B cell (primary cell): ENCODE measurements at regions of chr14 and their contacts with region 1.

Region 1: GRCh38 chr14:106436310-106436905 is 910.0 kb downstream of the TMEM121 start:
- DNase-seq: peak; percentile 38
- ATAC-seq: no peak
- H3K4me3 ChIP-seq: no peak overlapping the region
- H3K4me3 Mint-ChIP-seq: no peak overlapping the region
- H3K27ac ChIP-seq: no peak overlapping the region
- H3K27ac Mint-ChIP-seq: no peak overlapping the region
- H3K4me1 ChIP-seq: no peaks in the 10 kb centered on the region
- H3K4me1 Mint-ChIP-seq: no peaks in the 10 kb centered on the region
- H3K27me3 ChIP-seq: peaks cover 0 to 4% (median 0%) of the 10 kb centered on the region in 4 experiments
- H3K27me3 Mint-ChIP-seq: peaks cover 23% of the 10 kb centered on the region
- CTCF ChIP-seq: peak; percentile 80

Region 2: DNA sequence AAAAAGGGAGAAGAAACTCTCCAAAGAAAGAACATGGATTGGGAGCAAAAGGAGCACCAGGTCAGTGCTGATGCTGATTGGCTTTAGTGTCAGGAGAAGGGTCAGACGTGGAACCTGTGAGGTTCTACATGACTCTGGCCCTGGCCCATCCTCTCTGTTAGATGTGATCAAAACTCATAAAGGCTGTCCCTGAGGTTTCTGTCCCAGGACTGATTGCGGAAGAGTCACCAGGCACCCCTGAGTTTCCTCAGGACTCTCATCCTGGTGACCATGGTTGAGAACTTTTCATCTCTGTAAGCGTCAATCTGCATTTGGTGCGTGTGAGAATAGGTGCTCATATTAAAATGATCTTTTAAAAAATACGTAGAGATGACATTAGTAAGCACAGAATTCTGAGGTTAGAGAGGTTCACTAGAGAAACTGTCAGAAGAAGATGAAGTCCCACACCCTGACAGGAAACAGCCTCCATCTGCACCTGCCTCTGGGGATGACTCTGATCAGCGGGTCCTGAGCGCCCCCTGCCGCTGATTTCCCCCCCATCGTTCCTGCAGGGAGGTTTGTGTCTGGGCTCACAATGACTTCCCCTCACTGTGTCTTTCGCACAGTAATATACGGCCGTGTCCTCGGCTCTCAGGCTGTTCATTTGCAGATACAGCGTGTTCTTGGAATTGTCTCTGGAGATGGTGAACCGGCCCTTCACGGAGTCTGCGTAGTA is 168.2 kb before region 1 on chr14:
- CTCF ChIA-PET with region 1: no interaction called
- POLR2A ChIA-PET with region 1: no interaction called
- intact Hi-C with region 1: no loop called
- DNase-seq: peak; percentile 80
- ATAC-seq: peak; percentile 65
- H3K4me3 ChIP-seq: peak overlapping the region in 3 of 5 experiments; percentile 8 to 42 (median 11)
- H3K4me3 Mint-ChIP-seq: peak overlapping the region; percentile 87
- H3K27ac ChIP-seq: no peak overlapping the region
- H3K27ac Mint-ChIP-seq: peak overlapping the region; percentile 20
- H3K4me1 ChIP-seq: peaks cover 3 to 7% of the 10 kb centered on the region in 2 donors
- H3K4me1 Mint-ChIP-seq: peaks cover 8% of the 10 kb centered on the region
- H3K27me3 ChIP-seq: no peaks in the 10 kb centered on the region
- H3K27me3 Mint-ChIP-seq: peaks cover 30% of the 10 kb centered on the region
- CTCF ChIP-seq: peak; percentile 62

Region 3: GRCh38 chr14:106286697-106287290 is 149.6 kb before region 1 on chr14:
- CTCF ChIA-PET with region 1: no interaction called
- POLR2A ChIA-PET with region 1: no interaction called
- intact Hi-C with region 1: no loop called
- DNase-seq: peak; percentile 30
- ATAC-seq: no peak
- H3K4me3 ChIP-seq: no peak overlapping the region
- H3K4me3 Mint-ChIP-seq: no peak overlapping the region
- H3K27ac ChIP-seq: no peak overlapping the region
- H3K27ac Mint-ChIP-seq: no peak overlapping the region
- H3K4me1 ChIP-seq: no peaks in the 10 kb centered on the region
- H3K4me1 Mint-ChIP-seq: no peaks in the 10 kb centered on the region
- H3K27me3 ChIP-seq: no peaks in the 10 kb centered on the region
- H3K27me3 Mint-ChIP-seq: peaks cover 14% of the 10 kb centered on the region
- CTCF ChIP-seq: peak; percentile 62

Region 4: DNA sequence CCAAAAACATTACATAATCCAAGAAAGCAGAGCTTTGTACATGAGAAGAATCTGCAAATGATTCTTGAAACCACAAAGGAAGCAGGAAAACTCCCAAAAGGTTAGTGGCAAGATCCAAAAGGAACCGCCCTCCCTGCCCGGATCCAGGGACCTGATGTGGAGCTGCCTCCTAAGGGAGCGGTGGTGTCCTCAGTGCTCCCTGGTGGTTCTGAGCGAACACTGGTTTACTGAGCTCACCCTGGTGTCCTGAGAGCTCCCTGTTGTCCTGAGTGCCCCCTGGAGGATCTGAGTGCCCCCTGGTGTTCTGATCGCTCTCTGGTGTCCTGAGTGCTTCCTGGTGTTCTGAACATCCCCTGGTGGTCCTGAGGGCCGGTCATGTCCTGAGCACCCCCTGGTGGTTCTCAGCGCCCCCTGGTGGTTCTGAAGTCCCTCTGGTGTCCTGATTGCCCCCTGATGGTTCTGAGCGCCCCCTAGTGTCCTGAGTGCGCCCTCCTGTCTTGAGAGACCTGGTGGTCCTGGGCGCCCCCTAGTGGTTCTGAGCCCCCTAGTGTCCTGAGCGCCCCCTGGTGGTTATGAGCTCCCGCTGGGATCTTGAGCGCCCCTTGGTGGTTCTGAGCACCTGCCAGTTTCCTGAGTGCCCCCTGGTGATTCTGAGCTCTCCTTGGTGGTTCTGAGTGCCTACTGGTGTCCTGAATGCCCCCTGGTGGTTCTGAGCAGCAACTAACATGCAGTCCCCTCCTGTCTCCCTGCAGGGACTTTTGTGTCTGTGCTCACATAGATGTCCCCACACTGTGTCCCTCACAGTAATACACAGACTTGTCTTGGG is 19.0 kb before region 1 on chr14:
- CTCF ChIA-PET with region 1: interaction called, 23 read pairs
- POLR2A ChIA-PET with region 1: no interaction called
- intact Hi-C with region 1: no loop called
- DNase-seq: peak; percentile 89
- ATAC-seq: peak; percentile 73
- H3K4me3 ChIP-seq: no peak overlapping the region
- H3K4me3 Mint-ChIP-seq: no peak overlapping the region
- H3K27ac ChIP-seq: no peak overlapping the region
- H3K27ac Mint-ChIP-seq: peak overlapping the region; percentile 61
- H3K4me1 ChIP-seq: no peaks in the 10 kb centered on the region
- H3K4me1 Mint-ChIP-seq: no peaks in the 10 kb centered on the region
- H3K27me3 ChIP-seq: peaks cover 0 to 2% (median 0%) of the 10 kb centered on the region in 4 experiments
- H3K27me3 Mint-ChIP-seq: peaks cover 16% of the 10 kb centered on the region
- CTCF ChIP-seq: peak; percentile 91

Region 5: DNA sequence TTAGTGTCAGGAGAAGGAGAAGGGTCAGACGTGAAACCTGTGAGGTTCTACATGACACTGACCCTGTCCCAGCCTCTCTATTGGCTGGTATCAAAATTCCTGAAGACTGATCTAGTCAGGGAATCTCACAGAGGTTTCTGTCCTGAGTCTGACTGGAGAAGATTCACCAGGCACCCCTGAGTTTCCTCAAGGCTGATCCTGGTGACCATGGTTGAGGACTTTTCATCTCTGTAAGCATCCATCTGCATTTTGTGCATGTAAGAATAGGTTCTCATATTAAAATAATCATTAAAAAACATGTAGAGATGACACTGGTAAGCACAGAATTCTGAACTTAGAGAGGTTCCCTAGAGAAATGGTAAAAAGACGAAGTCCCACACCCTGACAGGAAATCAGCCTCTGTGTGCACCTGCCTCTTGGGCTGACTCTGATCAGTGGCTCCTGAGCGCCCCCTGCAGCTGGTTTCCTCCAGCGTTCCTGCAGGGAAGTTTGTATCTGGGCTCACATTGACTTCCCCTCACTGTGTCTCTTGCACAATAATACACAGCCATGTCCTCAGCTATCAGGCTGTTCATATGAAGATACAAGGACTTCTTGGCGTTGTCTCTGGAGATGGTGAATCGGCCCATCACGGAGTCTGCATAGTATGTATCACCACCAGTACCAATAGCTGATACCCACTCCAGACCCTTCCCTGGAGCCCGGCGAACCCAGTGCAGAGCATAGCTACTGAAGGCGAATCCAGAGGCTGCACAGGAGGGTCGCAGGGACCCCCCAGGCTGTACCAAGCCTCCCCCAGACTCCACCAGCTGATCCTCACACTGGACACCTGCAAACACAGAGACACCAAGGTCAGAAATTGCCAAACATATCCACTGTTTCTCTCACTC is 81.9 kb after region 1 on chr14:
- CTCF ChIA-PET with region 1: interaction called, 44 read pairs
- POLR2A ChIA-PET with region 1: no interaction called
- intact Hi-C with region 1: loop called (anchors 1 kb)
- DNase-seq: peak; percentile 85
- ATAC-seq: peak; percentile 79
- H3K4me3 ChIP-seq: no peak overlapping the region
- H3K4me3 Mint-ChIP-seq: peak overlapping the region; percentile 49
- H3K27ac ChIP-seq: peak overlapping the region in 1 of 2 donors; percentile 30
- H3K27ac Mint-ChIP-seq: peak overlapping the region; percentile 41
- H3K4me1 ChIP-seq: peaks cover 15 to 21% of the 10 kb centered on the region in 2 donors
- H3K4me1 Mint-ChIP-seq: peaks cover 20% of the 10 kb centered on the region
- H3K27me3 ChIP-seq: no peaks in the 10 kb centered on the region
- H3K27me3 Mint-ChIP-seq: peaks cover 13% of the 10 kb centered on the region
- CTCF ChIP-seq: peak; percentile 73

Region 6: GRCh38 chr14:106538201-106538600 is 101.8 kb after region 1 on chr14:
- CTCF ChIA-PET with region 1: interaction called, 14 read pairs
- POLR2A ChIA-PET with region 1: no interaction called
- intact Hi-C with region 1: no loop called
- DNase-seq: peak; percentile 54
- ATAC-seq: no peak
- H3K4me3 ChIP-seq: peak overlapping the region in 1 of 5 experiments; percentile 30
- H3K4me3 Mint-ChIP-seq: peak overlapping the region; percentile 60
- H3K27ac ChIP-seq: peak overlapping the region; percentile 57 to 85
- H3K27ac Mint-ChIP-seq: peak overlapping the region; percentile 85
- H3K4me1 ChIP-seq: peaks cover 33 to 36% of the 10 kb centered on the region in 2 donors
- H3K4me1 Mint-ChIP-seq: peaks cover 43% of the 10 kb centered on the region
- H3K27me3 ChIP-seq: peaks cover 0 to 5% (median 1%) of the 10 kb centered on the region in 4 experiments
- H3K27me3 Mint-ChIP-seq: peaks cover 10% of the 10 kb centered on the region
- CTCF ChIP-seq: no peak

Region 7: DNA sequence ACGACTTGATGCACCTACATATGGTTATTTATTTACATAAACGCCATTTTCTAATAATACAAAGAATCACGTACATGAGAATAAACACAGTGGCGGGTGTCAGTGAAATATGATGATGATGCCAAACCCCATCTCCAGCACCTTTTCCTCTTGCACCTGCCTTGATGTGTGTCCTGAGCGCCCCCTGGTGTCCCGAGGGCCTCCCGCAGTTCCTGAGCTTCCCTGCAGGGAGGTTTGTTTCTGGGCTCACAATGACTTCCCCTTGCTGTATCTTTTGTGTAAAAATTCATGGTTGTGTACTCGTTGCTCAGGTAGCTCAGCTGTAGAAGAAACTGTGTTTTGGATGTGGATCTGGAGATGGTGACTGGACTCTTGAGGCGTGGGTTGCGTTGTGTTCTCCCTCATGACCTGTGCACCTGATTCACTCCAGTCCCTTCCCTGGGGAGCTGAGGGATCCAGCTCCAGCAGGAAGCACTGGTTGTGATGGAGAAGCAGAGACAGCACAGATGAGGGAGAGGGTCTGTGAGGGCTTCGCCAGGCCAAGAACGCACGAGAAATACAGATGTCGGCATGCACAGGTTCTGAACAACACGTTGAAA is 127.7 kb after region 1 on chr14:
- CTCF ChIA-PET with region 1: interaction called, 16 read pairs
- POLR2A ChIA-PET with region 1: no interaction called
- intact Hi-C with region 1: no loop called
- DNase-seq: peak; percentile 82
- ATAC-seq: peak; percentile 73
- H3K4me3 ChIP-seq: no peak overlapping the region
- H3K4me3 Mint-ChIP-seq: no peak overlapping the region
- H3K27ac ChIP-seq: no peak overlapping the region
- H3K27ac Mint-ChIP-seq: peak overlapping the region; percentile 34
- H3K4me1 ChIP-seq: no peaks in the 10 kb centered on the region
- H3K4me1 Mint-ChIP-seq: peaks cover 3% of the 10 kb centered on the region
- H3K27me3 ChIP-seq: peaks cover 0 to under 1% (median 0%) of the 10 kb centered on the region in 4 experiments
- H3K27me3 Mint-ChIP-seq: peaks cover 12% of the 10 kb centered on the region
- CTCF ChIP-seq: peak; percentile 74

Region 8: GRCh38 chr14:106605548-106606448 is 169.4 kb after region 1 on chr14:
- CTCF ChIA-PET with region 1: no interaction called
- POLR2A ChIA-PET with region 1: no interaction called
- intact Hi-C with region 1: no loop called
- DNase-seq: peak; percentile 90
- ATAC-seq: peak; percentile 99
- H3K4me3 ChIP-seq: no peak overlapping the region
- H3K4me3 Mint-ChIP-seq: no peak overlapping the region
- H3K27ac ChIP-seq: no peak overlapping the region
- H3K27ac Mint-ChIP-seq: no peak overlapping the region
- H3K4me1 ChIP-seq: peaks cover 0 to 9% of the 10 kb centered on the region in 2 donors
- H3K4me1 Mint-ChIP-seq: peaks cover 14% of the 10 kb centered on the region
- H3K27me3 ChIP-seq: peaks cover 0 to 13% (median 8%) of the 10 kb centered on the region in 4 experiments
- H3K27me3 Mint-ChIP-seq: peaks cover 65% of the 10 kb centered on the region
- CTCF ChIP-seq: peak; percentile 76